Activated CD4-positive, alpha-beta T cell treated with anti-CD3 and anti-CD28 coated beads for 36 hours (primary cell): ENCODE measurements at regions of chr17 and their contacts with region 1.

Region 1: GRCh38 chr17:78186692-78187595 is at the starts of genes AFMID and TK1:
- DNase-seq: peak; percentile 98
- ATAC-seq: peak; percentile 96
- H3K4me3 Mint-ChIP-seq: peak within 1 kb of the TSS; percentile 78
- H3K27ac Mint-ChIP-seq: peak within 1 kb of the TSS; percentile 73
- H3K4me1 Mint-ChIP-seq: peaks cover 26% of the 10 kb centered on the region
- H3K27me3 Mint-ChIP-seq: no peaks in the 10 kb centered on the region
- total RNA-seq, gene AFMID: 26.3 to 26.7 TPM
- total RNA-seq, gene TK1: 157 to 195 TPM

Region 2: GRCh38 chr17:78128551-78129350 is 58.2 kb before region 1 on chr17 and contains the start of gene TMC6:
- CTCF ChIA-PET with region 1: no interaction called
- POLR2A ChIA-PET with region 1: no interaction called
- intact Hi-C with region 1: loop called in 1 of 2 experiments (anchors 1 kb)
- DNase-seq: peak; percentile 87
- ATAC-seq: peak; percentile 31
- H3K4me3 Mint-ChIP-seq: peak within 1 kb of the TSS; percentile 94
- H3K27ac Mint-ChIP-seq: peak within 1 kb of the TSS; percentile 96
- H3K4me1 Mint-ChIP-seq: peaks cover 52% of the 10 kb centered on the region
- H3K27me3 Mint-ChIP-seq: no peaks in the 10 kb centered on the region
- total RNA-seq, gene TMC6: 138 to 145 TPM

Region 3: GRCh38 chr17:78168242-78168902 is 18.6 kb before region 1 on chr17 and contains the start of gene SYNGR2:
- CTCF ChIA-PET with region 1: interaction called, 3 read pairs
- POLR2A ChIA-PET with region 1: interaction called, 3 read pairs
- intact Hi-C with region 1: loop called (anchors 1 to 2 kb)
- DNase-seq: peak; percentile 93
- ATAC-seq: peak; percentile 79
- H3K4me3 Mint-ChIP-seq: peak within 1 kb of the TSS; percentile 71
- H3K27ac Mint-ChIP-seq: peak within 1 kb of the TSS; percentile 69
- H3K4me1 Mint-ChIP-seq: peaks cover 35% of the 10 kb centered on the region
- H3K27me3 Mint-ChIP-seq: no peaks in the 10 kb centered on the region
- total RNA-seq, gene SYNGR2: 79.1 to 89.2 TPM

Region 4: GRCh38 chr17:78176548-78177025 is 10.4 kb before region 1 on chr17:
- CTCF ChIA-PET with region 1: interaction called, 21 read pairs
- POLR2A ChIA-PET with region 1: interaction called, 5 read pairs
- intact Hi-C with region 1: no loop called
- DNase-seq: peak; percentile 86
- ATAC-seq: peak; percentile 77
- H3K4me3 Mint-ChIP-seq: no peak overlapping the region
- H3K27ac Mint-ChIP-seq: no peak overlapping the region
- H3K4me1 Mint-ChIP-seq: peaks cover 47% of the 10 kb centered on the region
- H3K27me3 Mint-ChIP-seq: no peaks in the 10 kb centered on the region

Region 5: GRCh38 chr17:78214706-78215061 is 27.7 kb after region 1 on chr17:
- CTCF ChIA-PET with region 1: no interaction called
- POLR2A ChIA-PET with region 1: interaction called, 4 read pairs
- intact Hi-C with region 1: loop called (anchors 1 kb)
- DNase-seq: no peak
- ATAC-seq: no peak
- H3K4me3 Mint-ChIP-seq: peak overlapping the region; percentile 89
- H3K27ac Mint-ChIP-seq: peak overlapping the region; percentile 78
- H3K4me1 Mint-ChIP-seq: peaks cover 5% of the 10 kb centered on the region
- H3K27me3 Mint-ChIP-seq: no peaks in the 10 kb centered on the region